ENCODE measurements at regions of chr14 and their contacts with region 1.

Region 1: GRCh38 chr14:96584199-96584906 is 82.2 kb downstream of the PAPOLA start:
- DNase-seq: no peak
- H3K4me3 ChIP-seq: no peak overlapping the region
- H3K27ac ChIP-seq: no peak overlapping the region
- H3K4me1 ChIP-seq: no peaks in the 10 kb centered on the region
- H3K27me3 ChIP-seq: no peaks in the 10 kb centered on the region
- CTCF ChIP-seq: no peak
- EP300 ChIP-seq: no peak
- POLR2A ChIP-seq: no peak

Region 2: GRCh38 chr14:96486705-96487104 is 97.6 kb before region 1 on chr14:
- intact Hi-C with region 1: no loop called
- DNase-seq: no peak
- H3K4me3 ChIP-seq: no peak overlapping the region
- H3K27ac ChIP-seq: no peak overlapping the region
- H3K4me1 ChIP-seq: no peaks in the 10 kb centered on the region
- H3K27me3 ChIP-seq: no peaks in the 10 kb centered on the region
- CTCF ChIP-seq: no peak
- EP300 ChIP-seq: no peak
- POLR2A ChIP-seq: no peak

Region 3: DNA sequence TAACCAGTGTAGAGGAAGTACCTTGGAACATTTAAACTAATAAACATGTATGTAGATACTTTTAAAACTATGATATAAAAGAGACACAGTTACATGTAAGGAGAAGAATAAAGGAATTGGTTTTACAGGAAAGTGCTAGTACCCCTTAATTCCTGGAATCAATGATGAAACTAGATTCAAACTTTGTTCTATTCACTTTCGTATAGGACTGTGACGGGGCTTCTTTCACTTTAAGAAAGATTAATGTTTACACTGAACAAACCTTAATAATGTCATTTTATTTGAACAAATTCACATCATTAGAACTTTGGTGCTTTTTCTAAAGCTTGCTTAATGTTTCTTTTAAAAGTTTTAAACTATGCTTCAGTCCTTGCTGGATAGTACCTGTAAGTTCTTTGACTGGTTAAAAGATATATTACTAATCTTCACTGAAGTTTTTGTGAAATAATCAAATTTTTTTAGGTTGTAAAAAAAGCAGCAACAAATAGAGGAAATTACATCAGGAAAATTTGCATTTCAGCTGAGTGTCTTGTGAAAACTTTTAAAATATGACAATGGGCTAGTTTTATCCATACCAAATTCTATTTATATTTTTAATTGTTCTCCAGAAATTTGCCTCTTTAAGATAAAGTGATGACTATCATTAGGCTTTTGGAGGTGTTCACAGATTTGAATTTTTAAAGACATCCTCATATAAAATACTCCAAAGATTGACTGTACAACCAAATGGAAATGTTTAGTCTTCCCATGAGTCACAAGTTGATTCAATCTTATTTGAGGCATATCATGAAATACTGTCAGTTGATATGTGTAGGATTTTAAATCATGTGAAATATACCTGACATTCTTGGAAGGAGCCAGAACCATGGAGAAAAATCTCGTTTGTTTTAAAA is 46.0 kb before region 1 on chr14:
- intact Hi-C with region 1: no loop called
- DNase-seq: no peak
- H3K4me3 ChIP-seq: no peak overlapping the region
- H3K27ac ChIP-seq: no peak overlapping the region
- H3K4me1 ChIP-seq: no peaks in the 10 kb centered on the region
- H3K27me3 ChIP-seq: no peaks in the 10 kb centered on the region
- CTCF ChIP-seq: no peak
- EP300 ChIP-seq: no peak
- POLR2A ChIP-seq: no peak

Region 4: GRCh38 chr14:96729889-96730288 is 145.5 kb after region 1 on chr14:
- intact Hi-C with region 1: no loop called
- DNase-seq: no peak
- H3K4me3 ChIP-seq: no peak overlapping the region
- H3K27ac ChIP-seq: no peak overlapping the region
- H3K4me1 ChIP-seq: no peaks in the 10 kb centered on the region
- H3K27me3 ChIP-seq: no peaks in the 10 kb centered on the region
- CTCF ChIP-seq: no peak
- EP300 ChIP-seq: no peak
- POLR2A ChIP-seq: no peak

Region 5: DNA sequence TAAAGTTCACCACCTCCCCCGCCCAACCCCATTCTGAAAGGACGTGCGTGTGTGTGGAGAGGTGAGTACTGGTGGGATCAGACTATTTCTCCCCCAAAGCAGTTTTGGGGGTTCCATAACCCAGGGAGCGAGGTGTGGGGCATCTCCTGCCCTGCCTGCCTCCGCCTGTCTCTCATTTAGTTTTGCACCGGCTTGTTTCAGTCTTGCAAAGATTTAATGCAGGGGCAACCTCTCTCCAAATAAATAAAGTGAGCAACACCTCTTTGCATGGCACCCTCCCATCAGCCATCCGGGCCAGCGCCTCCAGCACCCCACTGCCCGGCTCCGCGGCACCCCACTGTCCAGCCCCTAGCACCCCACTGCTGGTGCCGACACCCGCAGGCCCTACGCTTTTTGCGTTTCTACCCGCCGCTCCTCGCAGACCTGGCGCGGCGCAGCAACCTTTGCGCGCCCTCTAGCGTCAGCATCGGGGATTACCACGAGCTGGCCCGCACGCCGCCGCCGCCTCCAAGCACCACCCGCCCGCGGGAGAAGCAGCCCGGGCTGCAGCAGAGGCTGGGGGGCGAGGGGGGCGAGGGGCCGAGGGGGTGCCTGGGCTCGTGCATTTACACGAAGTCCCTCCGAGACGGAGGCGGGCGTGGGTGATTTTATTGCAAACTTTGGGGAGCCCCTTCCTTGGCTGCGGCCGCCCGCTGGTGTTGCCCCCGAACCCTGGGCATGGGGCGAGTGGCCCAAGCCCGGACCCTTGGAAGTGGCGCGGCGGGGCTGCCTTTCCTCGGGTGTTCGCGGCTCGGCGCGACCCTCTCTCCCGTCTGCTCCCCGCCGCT is 157.0 kb after region 1 on chr14:
- intact Hi-C with region 1: loop called in 1 of 4 experiments (anchors 10 kb)
- DNase-seq: peak in 4 of 5 donors; percentile 20 to 68 (median 44)
- H3K4me3 ChIP-seq: no peak overlapping the region
- H3K27ac ChIP-seq: no peak overlapping the region
- H3K4me1 ChIP-seq: peaks cover 2% of the 10 kb centered on the region
- H3K27me3 ChIP-seq: no peaks in the 10 kb centered on the region
- CTCF ChIP-seq: peak in 2 of 3 donors; percentile 34 to 46
- EP300 ChIP-seq: no peak
- POLR2A ChIP-seq: no peak